Naive thymus-derived CD4-positive, alpha-beta T cell (primary cell): ENCODE measurements at regions of chr10 and their contacts with region 1.

Region 1: GRCh38 chr10:6050801-6051445 is 11.2 kb downstream of the IL2RA start:
- DNase-seq: peak; percentile 62 to 98 (median 90)
- ATAC-seq: peak; percentile 92
- H3K4me3 ChIP-seq: peak overlapping the region; percentile 49
- H3K4me3 Mint-ChIP-seq: peak overlapping the region; percentile 78 to 98 (median 92)
- H3K27ac ChIP-seq: peak overlapping the region; percentile 79
- H3K27ac Mint-ChIP-seq: peak overlapping the region; percentile 94 to 99 (median 97)
- H3K4me1 ChIP-seq: peaks cover 52 to 54% of the 10 kb centered on the region in 2 donors
- H3K4me1 Mint-ChIP-seq: peaks cover 54 to 90% (median 85%) of the 10 kb centered on the region in 7 donors
- H3K27me3 ChIP-seq: no peaks in the 10 kb centered on the region
- H3K27me3 Mint-ChIP-seq: no peaks in the 10 kb centered on the region

Region 2: GRCh38 chr10:5977471-5978229 is 73.3 kb before region 1 on chr10 and contains the start of gene IL15RA:
- CTCF ChIA-PET with region 1: no interaction called
- POLR2A ChIA-PET with region 1: no interaction called
- intact Hi-C with region 1: loop called (anchors 1 to 2 kb)
- DNase-seq: peak; percentile 60 to 89 (median 71)
- ATAC-seq: peak; percentile 84
- H3K4me3 ChIP-seq: peak within 1 kb of the TSS; percentile 97
- H3K4me3 Mint-ChIP-seq: peak within 1 kb of the TSS; percentile 89 to 98 (median 96)
- H3K27ac ChIP-seq: peak within 1 kb of the TSS; percentile 74
- H3K27ac Mint-ChIP-seq: peak within 1 kb of the TSS; percentile 85 to 97 (median 89)
- H3K4me1 ChIP-seq: peaks cover 0 to 6% of the 10 kb centered on the region in 2 donors
- H3K4me1 Mint-ChIP-seq: peaks cover 12 to 36% (median 21%) of the 10 kb centered on the region in 7 donors
- H3K27me3 ChIP-seq: no peaks in the 10 kb centered on the region
- H3K27me3 Mint-ChIP-seq: peaks cover 0 to 21% (median 0%) of the 10 kb centered on the region in 5 donors
- total RNA-seq, gene IL15RA: 3.5 to 24.9 (median 5.6) TPM

Region 3: DNA sequence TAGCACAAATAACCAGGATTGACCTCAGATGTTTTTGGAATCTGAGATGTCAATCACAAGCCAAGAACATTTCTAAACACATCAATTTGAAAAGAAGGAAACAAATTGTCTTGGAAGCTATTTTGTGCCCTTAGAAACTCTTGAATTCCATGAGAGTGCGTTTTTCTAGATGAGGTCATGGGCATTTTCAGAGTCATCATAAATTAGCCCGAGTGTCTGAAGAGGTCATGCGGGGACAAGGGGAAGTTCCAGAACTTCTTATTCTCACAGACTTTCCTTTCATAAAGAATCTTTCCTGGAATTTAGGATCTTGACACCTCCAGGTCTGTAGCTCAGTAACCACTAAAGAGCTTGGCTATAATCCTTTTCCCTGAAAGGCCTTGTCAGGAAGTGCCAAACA is 17.0 kb before region 1 on chr10:
- CTCF ChIA-PET with region 1: interaction called, 5 read pairs
- POLR2A ChIA-PET with region 1: interaction called, 52 read pairs
- intact Hi-C with region 1: loop called (anchors 1 kb)
- DNase-seq: no peak
- ATAC-seq: no peak
- H3K4me3 ChIP-seq: no peak overlapping the region
- H3K4me3 Mint-ChIP-seq: no peak overlapping the region
- H3K27ac ChIP-seq: no peak overlapping the region
- H3K27ac Mint-ChIP-seq: peak overlapping the region in 2 of 9 donors; percentile 34 to 48
- H3K4me1 ChIP-seq: peaks cover 26 to 32% of the 10 kb centered on the region in 2 donors
- H3K4me1 Mint-ChIP-seq: peaks cover 29 to 60% (median 40%) of the 10 kb centered on the region in 7 donors
- H3K27me3 ChIP-seq: no peaks in the 10 kb centered on the region
- H3K27me3 Mint-ChIP-seq: no peaks in the 10 kb centered on the region

Region 4: GRCh38 chr10:6068422-6068821 is 17.5 kb after region 1 on chr10:
- CTCF ChIA-PET with region 1: interaction called, 20 read pairs
- POLR2A ChIA-PET with region 1: interaction called, 88 read pairs
- intact Hi-C with region 1: loop called (anchors 1 kb)
- DNase-seq: peak in 7 of 9 donors; percentile 65 to 76 (median 69)
- ATAC-seq: peak; percentile 85
- H3K4me3 ChIP-seq: peak overlapping the region; percentile 46
- H3K4me3 Mint-ChIP-seq: peak overlapping the region; percentile 76 to 91 (median 82)
- H3K27ac ChIP-seq: peak overlapping the region; percentile 62
- H3K27ac Mint-ChIP-seq: peak overlapping the region; percentile 16 to 94 (median 90)
- H3K4me1 ChIP-seq: peaks cover 0 to 55% of the 10 kb centered on the region in 2 donors
- H3K4me1 Mint-ChIP-seq: peaks cover 52 to 94% (median 82%) of the 10 kb centered on the region in 7 donors
- H3K27me3 ChIP-seq: no peaks in the 10 kb centered on the region
- H3K27me3 Mint-ChIP-seq: no peaks in the 10 kb centered on the region

Region 5: GRCh38 chr10:6163364-6164270 is 112.7 kb after region 1 on chr10:
- CTCF ChIA-PET with region 1: no interaction called
- POLR2A ChIA-PET with region 1: no interaction called
- intact Hi-C with region 1: loop called in 1 of 2 experiments (anchors 5 kb)
- DNase-seq: peak; percentile 89 to 95 (median 94)
- ATAC-seq: peak; percentile 96
- H3K4me3 ChIP-seq: peak overlapping the region; percentile 81
- H3K4me3 Mint-ChIP-seq: peak overlapping the region; percentile 85 to 95 (median 92)
- H3K27ac ChIP-seq: peak overlapping the region; percentile 95
- H3K27ac Mint-ChIP-seq: peak overlapping the region; percentile 91 to 99 (median 97)
- H3K4me1 ChIP-seq: peaks cover 25 to 33% of the 10 kb centered on the region in 2 donors
- H3K4me1 Mint-ChIP-seq: peaks cover 30 to 64% (median 57%) of the 10 kb centered on the region in 7 donors
- H3K27me3 ChIP-seq: no peaks in the 10 kb centered on the region
- H3K27me3 Mint-ChIP-seq: no peaks in the 10 kb centered on the region

Region 6: DNA sequence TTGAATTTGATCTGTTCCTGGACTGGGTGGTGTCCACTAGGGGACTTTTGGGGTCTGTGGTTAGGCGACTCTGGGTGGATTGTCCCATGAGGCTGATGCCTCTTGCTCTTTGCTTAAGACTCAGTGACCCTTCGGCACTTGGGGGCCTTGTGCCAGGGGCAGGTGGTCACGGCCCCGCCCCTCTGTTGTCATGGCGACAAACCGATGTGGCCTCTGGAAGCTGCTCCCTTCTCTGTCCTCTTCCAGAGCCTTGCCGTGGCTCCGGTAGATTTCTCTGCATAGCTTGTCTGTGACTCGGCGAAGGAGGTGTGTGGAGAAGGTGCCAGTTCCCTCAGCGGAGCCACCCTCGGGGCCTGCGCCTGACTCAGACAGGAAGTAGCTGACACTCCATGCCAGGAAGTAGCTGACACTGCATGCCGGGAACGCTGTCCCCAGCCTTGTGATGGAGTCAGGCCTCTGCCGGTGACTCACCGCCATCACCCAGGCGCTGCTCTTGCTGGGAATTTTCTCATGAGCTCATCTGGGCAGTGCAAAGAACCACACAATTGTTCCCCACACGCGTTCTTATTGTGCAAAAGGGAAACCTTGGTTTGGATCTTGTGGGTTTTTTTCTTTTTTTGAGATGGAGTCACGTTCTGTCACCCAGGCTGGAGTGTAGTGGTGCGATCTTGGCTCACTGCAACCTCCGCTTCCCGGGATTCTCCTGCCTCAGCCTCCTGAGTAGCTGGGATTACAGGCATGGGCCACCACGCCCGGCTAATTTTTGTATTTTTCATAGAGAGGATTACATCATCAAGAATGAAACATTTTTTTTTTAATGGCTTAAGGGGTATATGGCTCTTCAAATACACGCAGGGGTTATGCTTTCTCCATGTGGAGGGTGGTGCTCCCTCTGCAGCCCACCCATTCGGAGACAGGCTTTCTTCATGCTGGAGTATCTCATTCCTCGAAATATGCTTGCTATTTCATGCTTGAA is 224.4 kb after region 1 on chr10:
- CTCF ChIA-PET with region 1: no interaction called
- POLR2A ChIA-PET with region 1: no interaction called
- intact Hi-C with region 1: no loop called
- DNase-seq: peak; percentile 44 to 84 (median 59)
- ATAC-seq: peak; percentile 92
- H3K4me3 ChIP-seq: peak overlapping the region; percentile 30
- H3K4me3 Mint-ChIP-seq: peak overlapping the region; percentile 32 to 82 (median 64)
- H3K27ac ChIP-seq: no peak overlapping the region
- H3K27ac Mint-ChIP-seq: peak overlapping the region; percentile 74 to 99 (median 93)
- H3K4me1 ChIP-seq: peaks cover 6 to 26% of the 10 kb centered on the region in 2 donors
- H3K4me1 Mint-ChIP-seq: peaks cover 16 to 64% (median 21%) of the 10 kb centered on the region in 7 donors
- H3K27me3 ChIP-seq: no peaks in the 10 kb centered on the region
- H3K27me3 Mint-ChIP-seq: no peaks in the 10 kb centered on the region

Region 7: DNA sequence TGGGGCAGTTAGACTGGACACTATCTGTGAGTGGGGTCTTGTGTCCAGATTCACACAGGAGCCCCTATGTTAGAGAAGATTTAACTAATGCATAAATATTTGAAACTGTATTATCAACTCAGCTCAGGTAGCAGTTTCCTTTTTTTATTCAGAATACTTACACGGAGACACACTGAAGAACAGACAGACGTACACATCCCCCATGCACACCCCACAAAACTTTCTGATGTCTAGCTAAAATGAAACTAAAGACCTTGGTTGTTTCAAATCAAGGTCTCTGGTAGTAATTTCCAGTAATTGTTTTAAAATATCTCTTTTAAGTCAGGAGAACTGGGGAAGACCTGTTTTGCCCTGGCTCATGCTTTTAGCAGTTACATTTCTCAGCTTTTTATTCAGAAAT is 584.9 kb after region 1 on chr10:
- CTCF ChIA-PET with region 1: no interaction called
- POLR2A ChIA-PET with region 1: no interaction called
- intact Hi-C with region 1: no loop called
- DNase-seq: peak in 2 of 9 donors; percentile 18 to 23
- ATAC-seq: no peak
- H3K4me3 ChIP-seq: no peak overlapping the region
- H3K4me3 Mint-ChIP-seq: peak overlapping the region in 5 of 10 donors; percentile 28 to 53 (median 39)
- H3K27ac ChIP-seq: no peak overlapping the region
- H3K27ac Mint-ChIP-seq: peak overlapping the region in 7 of 9 donors; percentile 2 to 85 (median 49)
- H3K4me1 ChIP-seq: peaks cover 0 to 4% of the 10 kb centered on the region in 2 donors
- H3K4me1 Mint-ChIP-seq: peaks cover 12 to 41% (median 21%) of the 10 kb centered on the region in 7 donors
- H3K27me3 ChIP-seq: no peaks in the 10 kb centered on the region
- H3K27me3 Mint-ChIP-seq: peaks cover 0 to 3% (median 0%) of the 10 kb centered on the region in 5 donors